Pancreas (tissue), 10 donors: ENCODE measurements at regions of chr4 and their contacts with region 1.

Region 1: DNA sequence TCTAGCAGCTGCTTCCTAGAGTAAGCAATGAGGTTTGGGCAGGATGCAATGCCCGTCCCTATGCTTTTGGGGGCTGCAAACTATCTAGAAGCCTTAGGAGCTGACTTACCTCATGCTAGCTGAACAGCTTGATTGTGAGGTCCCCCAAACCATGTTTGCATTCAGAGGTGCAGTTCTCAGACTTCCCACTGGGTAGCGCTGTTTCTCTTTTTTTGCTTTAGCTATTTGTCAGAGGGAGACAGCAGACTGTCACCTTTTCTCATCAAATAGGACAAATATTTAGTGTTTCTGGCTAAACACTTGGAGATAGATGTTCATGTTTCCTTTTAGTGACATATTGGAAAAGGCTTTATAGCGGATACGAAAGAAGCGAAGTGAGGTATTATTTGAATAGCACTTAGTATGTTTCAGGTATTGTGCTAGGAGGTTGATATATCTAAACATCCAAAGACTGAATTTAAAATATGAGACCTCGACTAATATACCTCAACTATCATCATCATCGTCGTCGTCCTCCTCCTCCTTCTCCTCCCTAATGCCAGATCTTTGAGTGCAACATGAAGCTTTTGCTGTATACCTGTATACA is 18.7 kb upstream of the TMEM192 start:
- DNase-seq: peak in 5 of 6 donors; percentile 16 to 80 (median 42)
- ATAC-seq: peak; percentile 46 to 96 (median 90)
- H3K4me3 ChIP-seq: no peak overlapping the region
- H3K27ac ChIP-seq: no peak overlapping the region
- H3K4me1 ChIP-seq: no peaks in the 10 kb centered on the region
- H3K27me3 ChIP-seq: no peaks in the 10 kb centered on the region
- CTCF ChIP-seq: peak; percentile 77 to 90 (median 79)

Region 2: DNA sequence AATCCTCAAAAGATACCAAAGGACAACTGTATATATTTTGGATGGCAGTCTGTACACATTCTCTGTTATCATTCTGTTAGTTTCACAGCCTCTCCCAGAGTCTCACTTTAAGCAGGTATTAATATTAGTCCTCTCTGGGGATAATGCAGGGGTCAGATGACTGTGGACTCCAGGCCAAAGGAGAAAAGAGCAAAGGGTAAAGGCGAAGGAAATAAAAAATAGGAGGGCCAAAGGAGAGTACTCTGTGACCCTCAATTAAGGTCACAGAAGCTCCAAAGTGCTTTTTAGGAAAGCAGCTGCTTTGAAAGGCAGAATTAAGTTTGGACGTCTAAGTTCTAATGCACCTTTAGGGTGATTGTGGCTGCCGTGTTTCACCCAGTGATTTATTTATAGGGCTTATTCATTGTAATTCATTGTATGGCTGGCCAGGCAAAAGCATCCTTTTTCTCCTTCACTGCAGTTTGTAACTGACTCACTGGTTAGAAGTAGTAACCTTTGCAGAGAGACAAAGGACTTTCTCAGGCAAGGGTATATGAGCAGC is 203.9 kb after region 1 on chr4:
- intact Hi-C with region 1: loop called in 1 of 3 experiments (anchors 5 kb)
- DNase-seq: no peak
- ATAC-seq: no peak
- H3K4me3 ChIP-seq: no peak overlapping the region
- H3K27ac ChIP-seq: no peak overlapping the region
- H3K4me1 ChIP-seq: peaks cover 0 to 9% (median 4%) of the 10 kb centered on the region in 3 donors
- H3K27me3 ChIP-seq: no peaks in the 10 kb centered on the region
- CTCF ChIP-seq: no peak

Region 3: GRCh38 chr4:165345666-165346417 is 214.5 kb after region 1 on chr4:
- intact Hi-C with region 1: loop called in 1 of 3 experiments (anchors 5 kb)
- DNase-seq: no peak
- ATAC-seq: no peak
- H3K4me3 ChIP-seq: no peak overlapping the region
- H3K27ac ChIP-seq: no peak overlapping the region
- H3K4me1 ChIP-seq: no peaks in the 10 kb centered on the region
- H3K27me3 ChIP-seq: no peaks in the 10 kb centered on the region
- CTCF ChIP-seq: no peak

Region 4: GRCh38 chr4:165464813-165465381 is 333.6 kb after region 1 on chr4:
- intact Hi-C with region 1: loop called in 2 of 3 experiments (anchors 5 to 10 kb)
- DNase-seq: no peak
- ATAC-seq: peak; percentile 69 to 91 (median 85)
- H3K4me3 ChIP-seq: no peak overlapping the region
- H3K27ac ChIP-seq: no peak overlapping the region
- H3K4me1 ChIP-seq: peaks cover 0 to 7% (median 0%) of the 10 kb centered on the region in 3 donors
- H3K27me3 ChIP-seq: no peaks in the 10 kb centered on the region
- CTCF ChIP-seq: peak; percentile 55 to 66 (median 63)